Heart right ventricle (tissue), 16 donors: ENCODE measurements at regions of chr21 and their contacts with region 1.

Region 1: GRCh38 chr21:45478115-45478801 is 64.0 kb downstream of the SLC19A1 start:
- DNase-seq: peak; percentile 70 to 73
- ATAC-seq: peak in 7 of 8 donors; percentile 49 to 76 (median 56)
- H3K4me3 ChIP-seq: peak overlapping the region in 5 of 10 donors; percentile 9 to 35 (median 31)
- H3K27ac ChIP-seq: peak overlapping the region in 8 of 10 donors; percentile 6 to 91 (median 44)
- H3K4me1 ChIP-seq: peaks cover 6 to 34% (median 13%) of the 10 kb centered on the region in 9 donors
- H3K27me3 ChIP-seq: no peaks in the 10 kb centered on the region
- CTCF ChIP-seq: peak; percentile 66 to 87 (median 82)

Region 2: GRCh38 chr21:45531393-45532215 is 53.3 kb after region 1 on chr21:
- intact Hi-C with region 1: loop called in 1 of 10 experiments (anchors 2 kb)
- DNase-seq: peak in 1 of 2 donors; percentile 14
- ATAC-seq: no peak
- H3K4me3 ChIP-seq: no peak overlapping the region
- H3K27ac ChIP-seq: peak overlapping the region in 1 of 10 donors; percentile 80
- H3K4me1 ChIP-seq: peaks cover 0 to 44% (median 15%) of the 10 kb centered on the region in 9 donors
- H3K27me3 ChIP-seq: no peaks in the 10 kb centered on the region
- CTCF ChIP-seq: no peak

Region 3: DNA sequence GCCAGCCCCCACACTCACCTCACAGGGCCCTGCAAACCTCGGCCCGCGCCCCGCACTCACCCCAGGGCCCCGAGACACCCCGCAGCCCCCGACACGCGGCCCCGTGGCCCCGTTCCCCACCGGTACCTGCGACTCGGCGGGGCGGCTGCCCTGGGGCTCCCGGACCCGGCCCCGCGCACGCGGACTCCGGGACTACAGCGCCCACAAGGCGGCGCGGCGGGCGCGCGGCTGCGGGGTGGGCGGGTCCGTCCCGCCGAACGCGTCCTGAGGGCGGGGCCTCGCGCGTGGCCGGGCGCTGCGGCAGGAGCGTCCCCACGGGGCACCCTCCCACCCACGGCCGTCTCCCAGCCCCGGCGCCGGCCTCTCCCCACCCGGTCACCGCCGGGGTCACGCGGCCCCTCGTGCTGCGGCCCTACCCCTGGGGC is 64.0 kb after region 1 on chr21 and contains the start of gene SLC19A1:
- intact Hi-C with region 1: loop called in 1 of 10 experiments (anchors 1 kb)
- DNase-seq: peak; percentile 46 to 80
- ATAC-seq: peak; percentile 63 to 92 (median 74)
- H3K4me3 ChIP-seq: peak within 1 kb of the TSS; percentile 21 to 67 (median 61)
- H3K27ac ChIP-seq: peak within 1 kb of the TSS in 8 of 10 donors; percentile 2 to 82 (median 39)
- H3K4me1 ChIP-seq: peaks cover 0 to 17% (median 9%) of the 10 kb centered on the region in 9 donors
- H3K27me3 ChIP-seq: no peaks in the 10 kb centered on the region
- CTCF ChIP-seq: peak in 8 of 9 donors; percentile 14 to 67 (median 38)
- total RNA-seq, gene SLC19A1: 1.5 to 8.5 (median 3.5) TPM

Region 4: DNA sequence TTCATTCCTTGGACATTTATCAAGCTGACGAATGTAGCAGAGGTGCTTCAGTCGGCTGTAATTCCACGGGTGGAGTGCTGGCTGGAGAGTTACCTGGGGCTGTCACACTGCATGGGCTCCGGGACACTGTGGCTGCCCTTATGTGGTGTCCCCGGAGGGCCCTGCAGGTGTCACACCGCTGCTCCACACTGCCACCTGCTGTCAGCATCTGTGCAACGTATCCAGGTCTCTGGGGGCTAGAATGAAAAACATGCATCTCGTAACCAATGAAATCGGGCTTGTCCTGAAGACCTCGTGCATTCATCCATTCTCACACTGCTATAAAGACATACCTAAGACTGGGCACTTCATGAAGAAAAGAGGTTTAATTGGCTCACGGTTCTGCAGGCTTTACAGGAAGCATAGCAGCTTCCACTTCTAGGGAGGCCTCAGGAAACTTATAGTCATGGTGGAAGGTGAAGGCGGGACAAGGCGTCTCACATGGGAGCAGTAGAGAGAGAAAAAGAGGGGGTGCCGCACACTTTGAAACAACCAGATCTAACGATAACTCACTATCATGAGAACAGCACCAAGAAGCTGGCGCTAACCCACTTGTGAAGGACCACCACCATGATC is 118.6 kb after region 1 on chr21:
- intact Hi-C with region 1: loop called in 3 of 10 experiments (anchors 5 to 10 kb)
- DNase-seq: peak; percentile 64 to 73
- ATAC-seq: peak; percentile 68 to 85 (median 78)
- H3K4me3 ChIP-seq: no peak overlapping the region
- H3K27ac ChIP-seq: no peak overlapping the region
- H3K4me1 ChIP-seq: peaks cover 0 to 6% (median 0%) of the 10 kb centered on the region in 9 donors
- H3K27me3 ChIP-seq: peaks cover 0 to 43% (median 18%) of the 10 kb centered on the region in 7 donors
- CTCF ChIP-seq: peak; percentile 52 to 90 (median 79)